ENCODE measurements at regions of chr18 and their contacts with region 1.

Region 1: GRCh38 chr18:9474983-9475642 is at the start of gene RALBP1:
- DNase-seq: peak; percentile 98
- ATAC-seq: peak; percentile 96
- H3K4me3 ChIP-seq: peak within 1 kb of the TSS; percentile 72 to 97 (median 92)
- H3K4me3 Mint-ChIP-seq: peak within 1 kb of the TSS; percentile 99
- H3K27ac ChIP-seq: peak within 1 kb of the TSS; percentile 64 to 78
- H3K27ac Mint-ChIP-seq: peak within 1 kb of the TSS; percentile 98
- H3K4me1 ChIP-seq: peaks cover 5 to 19% of the 10 kb centered on the region in 2 donors
- H3K4me1 Mint-ChIP-seq: peaks cover 39% of the 10 kb centered on the region
- H3K27me3 ChIP-seq: peaks cover 0 to 3% (median 0%) of the 10 kb centered on the region in 4 experiments
- H3K27me3 Mint-ChIP-seq: peaks cover 17% of the 10 kb centered on the region
- CTCF ChIP-seq: no peak
- total RNA-seq, gene RALBP1: 36.3 and 38.0 TPM in 2 replicates

Region 2: DNA sequence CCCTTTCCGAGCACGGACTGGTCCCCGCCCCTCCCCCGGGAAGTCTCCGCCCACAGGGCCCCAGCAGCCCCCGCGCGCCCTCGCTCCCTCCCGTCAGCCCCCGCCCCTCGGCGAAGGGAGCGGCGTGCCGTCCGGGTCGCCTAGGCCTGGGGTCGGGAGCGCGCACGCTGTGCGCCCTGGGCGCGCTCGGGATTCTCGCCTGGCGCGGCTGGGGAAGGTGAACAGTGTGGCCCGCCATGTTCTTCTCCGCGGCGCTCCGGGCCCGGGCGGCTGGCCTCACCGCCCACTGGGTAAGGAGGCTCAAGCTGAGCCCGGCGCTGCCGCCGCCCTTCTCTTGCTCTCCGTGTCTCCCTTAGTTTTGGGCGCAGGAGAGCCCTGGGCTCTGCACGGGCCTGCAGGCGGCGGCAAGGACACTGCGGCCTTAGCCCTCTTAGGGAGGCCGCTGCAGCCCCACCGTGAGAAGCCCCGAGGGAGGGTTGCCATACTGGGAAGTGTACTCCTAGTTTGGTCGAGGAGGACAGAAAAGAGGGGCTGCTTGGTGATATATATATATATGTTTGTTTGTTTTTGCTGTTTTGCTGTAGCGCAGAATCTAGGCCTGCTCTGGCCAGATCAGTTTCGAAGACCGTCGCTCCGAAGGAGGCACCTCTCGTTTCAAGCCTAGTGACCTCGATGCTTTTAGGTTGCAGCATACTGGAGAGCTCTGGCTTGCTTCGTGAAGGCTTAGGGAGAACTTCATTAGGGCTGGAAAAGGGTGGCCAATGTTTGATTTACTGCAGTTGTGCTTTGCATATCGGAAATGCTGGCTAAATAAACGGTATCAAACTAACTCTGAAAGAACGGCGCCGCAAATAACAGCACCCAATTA is 372.4 kb before region 1 on chr18 and contains the start of gene NDUFV2:
- CTCF ChIA-PET with region 1: no interaction called
- POLR2A ChIA-PET with region 1: no interaction called
- intact Hi-C with region 1: loop called (anchors 5 kb)
- DNase-seq: peak; percentile 96
- ATAC-seq: peak; percentile 96
- H3K4me3 ChIP-seq: peak within 1 kb of the TSS; percentile 77 to 98 (median 88)
- H3K4me3 Mint-ChIP-seq: peak within 1 kb of the TSS; percentile 95
- H3K27ac ChIP-seq: peak within 1 kb of the TSS; percentile 80 to 86
- H3K27ac Mint-ChIP-seq: peak within 1 kb of the TSS; percentile 93
- H3K4me1 ChIP-seq: peaks cover 43 to 50% of the 10 kb centered on the region in 2 donors
- H3K4me1 Mint-ChIP-seq: peaks cover 54% of the 10 kb centered on the region
- H3K27me3 ChIP-seq: no peaks in the 10 kb centered on the region
- H3K27me3 Mint-ChIP-seq: no peaks in the 10 kb centered on the region
- CTCF ChIP-seq: no peak
- total RNA-seq, gene NDUFV2: 135 and 137 TPM in 2 replicates

Region 3: GRCh38 chr18:9516437-9517064 is 41.4 kb after region 1 on chr18:
- CTCF ChIA-PET with region 1: interaction called, 5 read pairs
- POLR2A ChIA-PET with region 1: no interaction called
- intact Hi-C with region 1: loop called (anchors 2 kb)
- DNase-seq: peak; percentile 61
- ATAC-seq: peak; percentile 58
- H3K4me3 ChIP-seq: no peak overlapping the region
- H3K4me3 Mint-ChIP-seq: no peak overlapping the region
- H3K27ac ChIP-seq: no peak overlapping the region
- H3K27ac Mint-ChIP-seq: no peak overlapping the region
- H3K4me1 ChIP-seq: no peaks in the 10 kb centered on the region
- H3K4me1 Mint-ChIP-seq: no peaks in the 10 kb centered on the region
- H3K27me3 ChIP-seq: no peaks in the 10 kb centered on the region
- H3K27me3 Mint-ChIP-seq: no peaks in the 10 kb centered on the region
- CTCF ChIP-seq: peak; percentile 98

Region 4: DNA sequence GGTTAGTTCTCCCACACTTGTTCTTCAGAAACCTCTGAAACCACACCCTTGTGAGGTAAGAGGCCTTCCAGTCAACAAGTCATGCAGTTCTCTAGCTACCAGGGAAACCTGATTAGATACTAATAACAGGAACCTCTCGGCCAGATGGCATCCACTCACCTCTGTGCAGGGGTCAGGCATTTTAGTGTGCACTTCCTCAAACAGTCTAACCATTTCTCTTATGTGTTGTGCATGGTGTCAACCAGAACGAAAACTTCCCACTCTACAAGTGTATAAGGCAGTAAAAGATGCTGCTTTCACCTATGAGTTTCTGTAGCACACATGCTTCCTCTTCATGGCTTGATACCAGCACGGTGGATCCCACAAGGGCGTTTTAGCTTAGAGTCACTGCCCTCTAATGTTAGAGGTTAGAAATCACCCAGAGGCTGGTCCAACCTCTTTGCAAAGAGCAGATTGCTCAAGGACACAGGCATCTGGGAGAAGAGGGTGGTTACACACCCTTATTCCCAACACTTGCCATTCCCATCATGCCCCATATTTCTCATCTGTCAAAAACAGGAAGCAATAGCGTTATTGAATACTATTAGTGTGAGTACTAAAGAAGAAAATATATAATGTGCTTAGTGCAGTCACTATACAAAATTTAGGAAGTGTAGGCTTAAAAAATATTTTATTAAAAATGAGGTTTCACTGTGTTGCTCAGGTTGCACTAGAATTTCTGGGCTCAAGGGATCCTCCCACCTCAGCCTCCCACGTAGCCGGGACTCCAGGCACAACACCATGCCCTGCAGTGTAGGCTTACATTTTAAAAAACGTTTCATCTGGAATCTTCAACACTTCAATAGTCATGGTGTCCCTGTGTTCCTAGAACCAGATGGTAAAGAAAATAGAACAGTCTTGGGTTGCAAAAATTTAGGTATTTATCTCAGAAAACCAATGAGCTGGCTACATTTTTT is 198.5 kb after region 1 on chr18:
- CTCF ChIA-PET with region 1: no interaction called
- POLR2A ChIA-PET with region 1: no interaction called
- intact Hi-C with region 1: loop called (anchors 10 kb)
- DNase-seq: peak; percentile 95
- ATAC-seq: peak; percentile 95
- H3K4me3 ChIP-seq: no peak overlapping the region
- H3K4me3 Mint-ChIP-seq: peak overlapping the region; percentile 40
- H3K27ac ChIP-seq: peak overlapping the region; percentile 65 to 78
- H3K27ac Mint-ChIP-seq: peak overlapping the region; percentile 90
- H3K4me1 ChIP-seq: peaks cover 12 to 15% of the 10 kb centered on the region in 2 donors
- H3K4me1 Mint-ChIP-seq: peaks cover 10% of the 10 kb centered on the region
- H3K27me3 ChIP-seq: no peaks in the 10 kb centered on the region
- H3K27me3 Mint-ChIP-seq: no peaks in the 10 kb centered on the region
- CTCF ChIP-seq: peak; percentile 65

Measured in B cell (primary cell).